Left lung (tissue), 14 donors: ENCODE measurements at regions of chr20 and their contacts with region 1.

Region 1: GRCh38 chr20:20568604-20569205 is 143.7 kb downstream of the RALGAPA2 start:
- DNase-seq: peak in 1 of 4 donors; percentile 51
- ATAC-seq: peak; percentile 62
- H3K4me3 ChIP-seq: no peak overlapping the region
- H3K27ac ChIP-seq: no peak overlapping the region
- H3K4me1 ChIP-seq: no peaks in the 10 kb centered on the region
- H3K27me3 ChIP-seq: no peaks in the 10 kb centered on the region
- CTCF ChIP-seq: peak in 1 of 2 donors; percentile 62

Region 2: GRCh38 chr20:20360464-20360863 is 208.2 kb before region 1 on chr20:
- intact Hi-C with region 1: loop called in 1 of 2 experiments (anchors 10 kb)
- DNase-seq: peak in 1 of 4 donors; percentile 74
- ATAC-seq: peak; percentile 97
- H3K4me3 ChIP-seq: no peak overlapping the region
- H3K27ac ChIP-seq: no peak overlapping the region
- H3K4me1 ChIP-seq: peaks cover 8 to 30% of the 10 kb centered on the region in 2 donors
- H3K27me3 ChIP-seq: peaks cover 52 to 72% of the 10 kb centered on the region in 2 donors
- CTCF ChIP-seq: peak; percentile 62 to 78